ENCODE measurements at regions of chr2 and their contacts with region 1.

Region 1: DNA sequence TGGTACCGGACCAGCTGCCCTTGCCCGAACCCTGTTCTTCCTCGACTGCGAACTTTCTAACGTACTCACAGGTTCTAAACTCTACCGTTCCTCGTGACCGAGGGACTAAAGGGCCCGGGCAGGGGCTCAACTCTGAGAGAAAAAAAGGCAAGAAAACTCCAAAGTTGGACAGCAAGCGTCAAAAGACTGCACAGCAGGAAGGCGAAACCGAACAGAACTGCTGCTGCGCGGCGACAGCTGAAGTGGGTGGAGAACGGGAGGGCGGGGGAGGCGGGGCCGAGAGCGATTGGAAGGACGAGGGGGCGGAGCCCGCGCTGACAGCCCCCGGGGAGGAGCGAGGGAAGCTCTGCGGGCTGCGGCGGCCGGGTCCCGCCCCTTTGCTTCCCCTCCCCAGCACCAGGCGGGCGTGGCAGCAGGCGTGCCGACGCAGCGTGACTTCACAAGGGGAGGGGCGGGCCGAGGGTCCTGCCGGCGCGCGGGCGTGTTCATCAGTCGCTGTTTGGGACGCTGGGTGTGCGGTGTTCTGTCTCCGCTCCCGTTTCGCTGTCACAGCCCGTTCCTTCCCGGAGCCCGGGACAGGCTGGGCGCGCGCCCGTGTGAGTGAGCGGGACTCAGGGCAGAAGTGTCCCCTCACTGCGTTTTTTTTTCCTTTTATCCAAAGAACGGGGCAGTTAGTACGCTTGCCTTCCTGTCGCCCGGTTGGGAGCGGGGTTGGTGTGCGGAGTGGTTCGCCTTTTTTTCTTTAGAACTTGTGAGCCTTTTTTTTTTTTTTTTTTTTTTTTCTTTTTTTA is at the start of gene NABP1:
- DNase-seq: peak; percentile 98
- H3K4me3 Mint-ChIP-seq: peak within 1 kb of the TSS; percentile 94
- H3K27ac Mint-ChIP-seq: peak within 1 kb of the TSS; percentile 98
- H3K4me1 Mint-ChIP-seq: peaks cover 63% of the 10 kb centered on the region
- H3K27me3 Mint-ChIP-seq: no peaks in the 10 kb centered on the region
- total RNA-seq, gene NABP1: 51.0 and 58.4 TPM in 2 replicates

Region 2: GRCh38 chr2:189783927-189784867 is 1893.6 kb before region 1 on chr2 and contains the starts of genes ORMDL1 and PMS1:
- intact Hi-C with region 1: loop called (anchors 10 kb)
- DNase-seq: peak; percentile 94
- H3K4me3 Mint-ChIP-seq: peak within 1 kb of the TSS; percentile 92
- H3K27ac Mint-ChIP-seq: peak within 1 kb of the TSS; percentile 93
- H3K4me1 Mint-ChIP-seq: peaks cover 40% of the 10 kb centered on the region
- H3K27me3 Mint-ChIP-seq: no peaks in the 10 kb centered on the region
- total RNA-seq, gene ORMDL1: 78.7 and 80.1 TPM in 2 replicates
- total RNA-seq, gene PMS1: 54.4 and 55.9 TPM in 2 replicates

Region 3: DNA sequence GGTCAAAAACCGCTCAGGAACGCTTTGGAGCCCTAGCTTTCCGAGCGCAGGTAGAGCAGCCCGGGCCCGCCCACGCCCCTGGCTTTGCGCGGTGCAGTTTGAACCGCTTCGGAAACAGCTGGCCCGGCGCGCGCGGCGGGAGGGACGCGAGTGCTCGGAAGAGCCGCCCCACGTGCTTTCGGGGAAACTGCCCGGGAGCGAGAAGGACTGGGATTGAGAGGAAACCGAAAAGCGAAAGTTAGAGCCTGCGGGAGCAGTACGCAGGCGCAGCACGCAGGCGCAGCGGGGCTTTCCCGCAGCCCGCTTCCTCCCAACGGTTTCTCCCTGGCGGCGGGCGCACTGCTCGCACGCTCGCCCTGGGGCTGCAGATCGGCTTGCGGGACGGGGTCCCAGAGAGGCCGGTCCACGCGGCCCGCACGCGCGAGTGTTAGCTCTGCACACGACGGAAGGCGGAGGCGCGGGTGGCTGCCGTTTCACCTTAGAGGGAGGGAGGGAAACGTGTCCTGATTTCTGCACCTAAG is 657.6 kb before region 1 on chr2:
- intact Hi-C with region 1: loop called (anchors 2 kb)
- DNase-seq: peak; percentile 96
- H3K4me3 Mint-ChIP-seq: no peak overlapping the region
- H3K27ac Mint-ChIP-seq: no peak overlapping the region
- H3K4me1 Mint-ChIP-seq: peaks cover 45% of the 10 kb centered on the region
- H3K27me3 Mint-ChIP-seq: peaks cover 2% of the 10 kb centered on the region

Region 4: GRCh38 chr2:191566344-191566743 is 111.5 kb before region 1 on chr2:
- intact Hi-C with region 1: loop called (anchors 1 kb)
- DNase-seq: peak; percentile 25
- H3K4me3 Mint-ChIP-seq: no peak overlapping the region
- H3K27ac Mint-ChIP-seq: no peak overlapping the region
- H3K4me1 Mint-ChIP-seq: peaks cover 42% of the 10 kb centered on the region
- H3K27me3 Mint-ChIP-seq: peaks cover 51% of the 10 kb centered on the region

Region 5: DNA sequence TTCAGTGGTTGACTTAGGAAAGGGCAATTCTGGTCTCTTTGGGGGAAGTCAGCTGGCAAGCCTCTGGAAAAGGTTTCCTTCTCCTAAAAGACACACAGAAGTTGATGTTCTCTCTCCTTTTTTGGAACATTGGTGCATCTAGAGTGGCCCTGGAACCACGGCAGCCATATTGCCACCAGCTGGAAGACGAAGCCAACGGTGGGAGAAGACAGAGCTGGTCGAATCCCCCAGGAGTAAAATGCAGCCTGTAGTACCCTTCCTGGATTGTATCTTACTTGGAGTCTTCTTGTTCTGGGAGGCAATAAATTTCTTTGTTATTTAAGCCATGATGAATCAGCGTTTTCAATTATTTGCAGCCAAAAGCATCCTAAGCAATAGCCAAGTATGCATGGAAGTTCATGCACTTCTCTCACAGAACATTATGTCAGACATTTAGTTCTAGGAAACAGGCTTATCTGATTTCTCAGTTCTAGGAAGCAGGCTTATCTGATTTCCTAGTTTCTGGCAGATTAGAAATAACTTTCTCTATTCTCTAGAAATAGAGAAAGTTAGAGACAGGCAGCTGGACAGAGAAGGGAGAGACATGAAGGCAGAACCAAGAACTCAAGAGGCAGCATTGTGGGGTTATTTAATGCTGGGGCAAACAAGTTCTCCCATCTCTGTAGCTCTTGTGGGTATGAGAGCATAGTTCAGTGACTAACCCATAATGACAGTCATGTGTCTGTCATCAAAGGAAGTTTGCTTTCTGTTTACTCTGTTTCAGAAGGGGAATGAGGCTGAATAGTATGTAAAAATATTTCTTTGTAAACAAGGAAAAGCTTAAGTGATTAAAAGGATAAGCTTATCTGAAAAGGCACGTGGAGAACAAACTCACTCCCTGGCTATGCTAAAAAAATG is 40.4 kb before region 1 on chr2:
- intact Hi-C with region 1: loop called (anchors 1 kb)
- DNase-seq: no peak
- H3K4me3 Mint-ChIP-seq: peak overlapping the region; percentile 75
- H3K27ac Mint-ChIP-seq: peak overlapping the region; percentile 84
- H3K4me1 Mint-ChIP-seq: peaks cover 56% of the 10 kb centered on the region
- H3K27me3 Mint-ChIP-seq: peaks cover 1% of the 10 kb centered on the region

Region 6: GRCh38 chr2:191713837-191714236 is 36.0 kb after region 1 on chr2:
- intact Hi-C with region 1: no loop called
- DNase-seq: no peak
- H3K4me3 Mint-ChIP-seq: no peak overlapping the region
- H3K27ac Mint-ChIP-seq: no peak overlapping the region
- H3K4me1 Mint-ChIP-seq: no peaks in the 10 kb centered on the region
- H3K27me3 Mint-ChIP-seq: peaks cover 3% of the 10 kb centered on the region

Region 7: GRCh38 chr2:191740016-191740419 is 62.2 kb after region 1 on chr2:
- intact Hi-C with region 1: loop called (anchors 1 kb)
- DNase-seq: peak; percentile 64
- H3K4me3 Mint-ChIP-seq: peak overlapping the region; percentile 2
- H3K27ac Mint-ChIP-seq: peak overlapping the region; percentile 45
- H3K4me1 Mint-ChIP-seq: peaks cover 18% of the 10 kb centered on the region
- H3K27me3 Mint-ChIP-seq: peaks cover 25% of the 10 kb centered on the region

Region 8: GRCh38 chr2:191754103-191754502 is 76.3 kb after region 1 on chr2:
- intact Hi-C with region 1: no loop called
- DNase-seq: no peak
- H3K4me3 Mint-ChIP-seq: no peak overlapping the region
- H3K27ac Mint-ChIP-seq: no peak overlapping the region
- H3K4me1 Mint-ChIP-seq: peaks cover 7% of the 10 kb centered on the region
- H3K27me3 Mint-ChIP-seq: peaks cover 14% of the 10 kb centered on the region

Measured in activated T-helper 1 cell treated with anti-CD3 and anti-CD28 coated beads, Interleukin-12 subunit alpha, Interleukin-12 subunit beta, Interleukin-2, Interleukin-4 antibody, amounts not matched to agents 30 ng/mL and 10 ng/mL and 1 ng/mL, durations not matched to agents 14 hours and 24 hours and 36 hours (primary cell).